Activated B cell treated with CpG ODN at 0.5 μM for 24 hours (primary cell): ENCODE measurements at regions of chr6 and their contacts with region 1.

Region 1: DNA sequence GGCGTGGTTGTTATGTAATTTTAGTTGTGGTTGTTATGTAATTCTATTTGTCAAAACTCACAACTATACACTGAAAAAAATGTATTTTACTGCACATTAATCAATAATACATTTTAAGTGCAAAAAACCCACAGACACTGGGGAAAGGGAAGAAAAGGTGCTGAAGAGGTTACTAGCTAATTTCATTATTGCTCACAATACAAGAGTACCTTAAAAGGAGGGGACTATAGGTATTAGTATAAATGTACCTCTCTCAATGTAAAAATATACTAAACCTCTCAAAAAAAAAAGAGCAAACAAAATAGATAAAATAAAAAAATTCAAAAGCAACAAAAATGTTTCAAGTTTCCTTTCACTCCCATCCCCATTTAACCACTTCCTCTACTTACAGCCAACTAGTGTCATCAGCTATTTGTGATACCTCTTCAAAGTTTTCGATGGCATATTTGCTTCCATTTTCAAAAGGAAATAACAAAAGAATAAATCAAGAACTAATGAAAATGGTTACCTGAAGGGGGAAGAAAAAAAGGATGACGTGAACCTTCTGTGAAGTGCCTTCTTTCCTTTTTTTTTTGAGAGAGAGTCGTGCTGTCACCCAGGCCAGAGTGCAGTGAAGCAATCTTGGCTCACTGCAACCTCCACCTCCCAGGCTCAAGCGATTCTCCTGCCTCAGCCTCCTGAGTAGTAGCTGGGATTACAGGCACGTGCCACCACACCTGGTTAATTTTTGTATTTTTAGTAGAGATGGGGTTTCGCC is 30.2 kb downstream of the RANBP9 start:
- DNase-seq: no peak
- ATAC-seq: no peak
- H3K4me3 Mint-ChIP-seq: peak overlapping the region; percentile 20
- H3K27ac Mint-ChIP-seq: peak overlapping the region; percentile 51
- H3K4me1 Mint-ChIP-seq: peaks cover 33% of the 10 kb centered on the region
- H3K27me3 Mint-ChIP-seq: no peaks in the 10 kb centered on the region
- CTCF ChIP-seq: no peak

Region 2: DNA sequence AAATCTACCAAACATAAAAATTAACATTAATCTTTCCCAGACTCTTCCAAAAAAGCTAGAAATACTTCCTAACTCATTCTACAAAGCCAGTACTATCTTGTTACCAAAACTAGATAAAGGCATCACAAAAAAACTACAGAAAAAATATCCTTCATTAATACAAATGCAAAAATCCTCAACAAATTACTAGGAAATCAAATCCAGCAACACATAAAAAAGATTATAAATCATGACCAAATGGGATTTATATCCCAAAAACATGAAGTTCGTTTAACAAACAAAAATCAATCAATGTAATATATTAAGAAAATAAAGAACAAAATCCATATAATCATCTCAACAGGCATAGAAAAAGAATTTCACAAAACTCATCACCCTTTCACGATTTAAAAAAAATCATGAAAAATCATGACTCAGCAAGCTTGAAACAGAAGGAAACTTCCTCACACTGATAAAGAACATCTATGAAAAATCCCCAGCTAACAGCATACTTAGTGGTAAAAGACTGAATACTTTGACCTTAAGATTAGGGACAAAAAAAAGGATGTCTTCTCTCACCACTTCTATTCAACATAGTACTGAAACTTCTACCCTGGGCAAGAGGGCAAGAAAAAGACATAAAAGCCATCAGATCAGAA is 13.1 kb before region 1 on chr6:
- CTCF ChIA-PET with region 1: no interaction called
- POLR2A ChIA-PET with region 1: interaction called, 3 read pairs
- intact Hi-C with region 1: loop called (anchors 2 kb)
- DNase-seq: no peak
- ATAC-seq: no peak
- H3K4me3 Mint-ChIP-seq: no peak overlapping the region
- H3K27ac Mint-ChIP-seq: no peak overlapping the region
- H3K4me1 Mint-ChIP-seq: peaks cover 74% of the 10 kb centered on the region
- H3K27me3 Mint-ChIP-seq: no peaks in the 10 kb centered on the region
- CTCF ChIP-seq: no peak

Region 3: DNA sequence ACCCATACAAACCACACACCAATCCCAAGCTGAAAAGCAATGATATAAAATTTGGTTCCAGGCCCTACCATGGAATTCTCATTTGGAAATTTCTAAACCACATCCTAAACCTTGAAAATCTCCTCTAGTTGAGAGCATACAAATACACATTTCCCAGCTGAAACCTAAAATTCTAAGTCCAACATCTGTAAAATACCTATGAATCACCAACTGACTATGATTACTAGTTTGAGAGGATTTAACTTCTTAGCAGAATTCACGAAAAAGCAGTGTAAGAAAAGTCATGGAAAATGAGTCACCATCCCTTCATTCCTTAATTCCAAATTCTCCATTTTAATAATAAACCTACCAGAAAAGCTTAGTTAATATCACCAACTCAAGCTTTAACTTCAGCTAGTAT is 14.7 kb after region 1 on chr6:
- CTCF ChIA-PET with region 1: no interaction called
- POLR2A ChIA-PET with region 1: no interaction called
- intact Hi-C with region 1: loop called (anchors 2 kb)
- DNase-seq: no peak
- ATAC-seq: no peak
- H3K4me3 Mint-ChIP-seq: no peak overlapping the region
- H3K27ac Mint-ChIP-seq: no peak overlapping the region
- H3K4me1 Mint-ChIP-seq: peaks cover 57% of the 10 kb centered on the region
- H3K27me3 Mint-ChIP-seq: no peaks in the 10 kb centered on the region
- CTCF ChIP-seq: no peak

Region 4: GRCh38 chr6:13727876-13728275 is 46.4 kb after region 1 on chr6:
- CTCF ChIA-PET with region 1: no interaction called
- POLR2A ChIA-PET with region 1: no interaction called
- intact Hi-C with region 1: no loop called
- DNase-seq: no peak
- ATAC-seq: no peak
- H3K4me3 Mint-ChIP-seq: no peak overlapping the region
- H3K27ac Mint-ChIP-seq: no peak overlapping the region
- H3K4me1 Mint-ChIP-seq: peaks cover 4% of the 10 kb centered on the region
- H3K27me3 Mint-ChIP-seq: no peaks in the 10 kb centered on the region
- CTCF ChIP-seq: no peak